ENCODE measurements at regions of chr10 and their contacts with region 1.

Region 1: GRCh38 chr10:100962351-100963080 is 6.8 kb upstream of the SEMA4G start:
- DNase-seq: no peak
- H3K4me3 ChIP-seq: no peak overlapping the region
- H3K27ac ChIP-seq: no peak overlapping the region
- H3K4me1 ChIP-seq: no peaks in the 10 kb centered on the region
- H3K27me3 ChIP-seq: no peaks in the 10 kb centered on the region
- CTCF ChIP-seq: no peak
- POLR2A ChIP-seq: no peak

Region 2: DNA sequence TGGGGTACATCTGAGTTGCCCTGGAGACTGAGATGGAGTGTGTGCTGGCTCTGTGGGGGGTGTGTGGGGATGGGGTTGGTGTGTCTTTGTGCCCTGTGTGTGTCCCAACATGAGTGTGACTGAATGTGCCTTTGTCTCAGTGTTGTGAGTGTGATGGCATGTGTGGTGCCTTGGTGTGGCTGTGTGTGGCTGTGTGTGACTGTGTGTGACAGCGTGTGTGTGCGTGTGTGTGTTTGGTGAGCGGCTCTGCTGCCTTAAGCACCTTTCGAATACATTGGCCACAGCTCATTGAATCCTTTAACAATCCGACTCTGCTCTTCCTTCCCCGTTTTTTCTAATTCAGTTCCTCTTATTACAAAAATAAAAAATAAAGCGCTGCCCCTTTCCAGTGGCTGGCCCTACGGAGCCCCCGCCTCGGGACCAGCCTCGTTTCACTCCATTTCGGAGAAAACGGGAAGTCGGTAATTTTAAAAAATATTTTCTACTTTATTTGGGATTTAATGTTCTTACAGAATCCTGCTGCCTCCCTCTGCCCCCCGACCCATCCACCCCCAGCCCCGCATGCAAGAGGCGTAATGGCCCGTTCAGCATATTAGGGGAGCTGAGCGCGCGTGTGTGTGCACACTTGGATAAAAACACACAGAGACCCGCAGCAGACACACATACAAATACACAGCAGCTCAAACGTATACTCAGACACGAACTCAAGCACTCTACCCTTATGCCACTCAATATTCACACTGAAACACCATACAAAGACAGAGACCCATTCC is 391.2 kb before region 1 on chr10:
- CTCF ChIA-PET with region 1: no interaction called
- POLR2A ChIA-PET with region 1: no interaction called
- dilution Hi-C with region 1: no loop called
- intact Hi-C with region 1: no loop called
- DNase-seq: no peak
- H3K4me3 ChIP-seq: no peak overlapping the region
- H3K27ac ChIP-seq: no peak overlapping the region
- H3K4me1 ChIP-seq: no peaks in the 10 kb centered on the region
- H3K27me3 ChIP-seq: peaks cover 41 to 44% of the 10 kb centered on the region in 2 experiments
- CTCF ChIP-seq: no peak
- POLR2A ChIP-seq: no peak

Region 3: GRCh38 chr10:100943508-100943907 is 19.0 kb before region 1 on chr10:
- CTCF ChIA-PET with region 1: interaction called, 10 read pairs
- POLR2A ChIA-PET with region 1: no interaction called
- dilution Hi-C with region 1: no loop called
- intact Hi-C with region 1: no loop called
- DNase-seq: no peak
- H3K4me3 ChIP-seq: no peak overlapping the region
- H3K27ac ChIP-seq: no peak overlapping the region
- H3K4me1 ChIP-seq: no peaks in the 10 kb centered on the region
- H3K27me3 ChIP-seq: no peaks in the 10 kb centered on the region
- CTCF ChIP-seq: no peak
- POLR2A ChIP-seq: no peak